ENCODE measurements at regions of chr21 and their contacts with region 1.

Region 1: DNA sequence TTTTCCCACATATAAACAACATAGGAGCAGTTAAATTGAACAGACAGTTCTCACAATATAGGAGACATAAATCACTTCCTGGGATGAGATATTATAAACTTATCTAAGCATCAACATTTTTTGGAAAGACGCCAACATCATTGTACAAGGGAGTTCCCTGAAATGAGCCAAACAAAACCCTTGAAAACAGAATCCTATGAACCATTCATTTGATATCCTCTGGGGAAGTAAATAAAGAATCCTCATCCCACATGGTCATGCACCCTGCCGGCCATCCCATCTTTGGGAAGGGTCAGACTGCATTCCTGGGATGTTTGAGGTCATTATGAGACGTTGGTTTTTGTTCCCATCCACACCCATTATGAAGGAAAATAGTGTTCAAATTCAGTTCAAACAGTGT is 111.8 kb upstream of the USP25 start:
- DNase-seq: no peak
- ATAC-seq: no peak
- H3K4me3 ChIP-seq: no peak overlapping the region
- H3K27ac ChIP-seq: no peak overlapping the region
- H3K4me1 ChIP-seq: no peaks in the 10 kb centered on the region
- H3K27me3 ChIP-seq: no peaks in the 10 kb centered on the region
- CTCF ChIP-seq: no peak
- POLR2A ChIP-seq: no peak

Region 2: GRCh38 chr21:15534450-15534886 is 83.5 kb before region 1 on chr21:
- intact Hi-C with region 1: no loop called
- DNase-seq: no peak
- ATAC-seq: no peak
- H3K4me3 ChIP-seq: no peak overlapping the region
- H3K27ac ChIP-seq: no peak overlapping the region
- H3K4me1 ChIP-seq: no peaks in the 10 kb centered on the region
- H3K27me3 ChIP-seq: peaks cover 0 to 19% (median 0%) of the 10 kb centered on the region in 9 donors
- CTCF ChIP-seq: no peak
- POLR2A ChIP-seq: no peak

Region 3: DNA sequence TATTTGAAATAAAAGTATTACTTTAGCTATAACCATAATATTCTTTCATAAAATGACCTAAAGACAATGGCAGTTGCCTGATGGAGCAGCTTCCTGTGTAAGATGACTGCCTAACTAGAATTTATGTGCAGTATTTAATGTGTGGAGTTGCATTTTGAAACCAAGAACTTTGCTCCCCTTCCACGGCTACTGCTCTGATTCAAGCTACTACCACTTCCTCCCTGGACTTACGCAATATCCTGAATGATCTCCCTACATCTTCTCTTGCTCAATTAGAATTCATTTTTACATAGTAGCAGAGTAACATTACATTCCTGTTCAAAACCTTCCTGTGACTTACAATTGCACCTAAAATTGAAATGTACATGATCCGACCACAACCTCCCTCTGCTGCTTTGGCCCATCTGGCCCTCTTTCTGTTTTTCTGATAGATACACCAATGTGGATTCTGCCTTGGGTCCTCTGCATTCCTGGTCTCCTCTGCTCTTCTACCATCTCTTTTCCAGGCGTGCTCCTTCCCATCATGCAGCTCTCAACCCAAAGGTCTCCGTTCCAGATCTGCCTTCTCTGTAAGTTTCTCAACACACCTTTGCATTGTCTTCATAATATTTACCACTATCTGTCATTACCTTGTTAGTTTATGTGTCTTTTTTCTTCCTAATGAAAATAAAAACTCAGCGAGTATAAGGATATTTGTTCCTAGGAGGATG is 64.4 kb after region 1 on chr21:
- intact Hi-C with region 1: no loop called
- DNase-seq: no peak
- ATAC-seq: peak in 3 of 4 donors; percentile 20 to 66 (median 50)
- H3K4me3 ChIP-seq: peak overlapping the region in 1 of 12 donors; percentile 28
- H3K27ac ChIP-seq: peak overlapping the region in 1 of 12 donors; percentile 86
- H3K4me1 ChIP-seq: peaks cover 0 to 42% (median 0%) of the 10 kb centered on the region in 12 donors
- H3K27me3 ChIP-seq: no peaks in the 10 kb centered on the region
- CTCF ChIP-seq: no peak
- POLR2A ChIP-seq: no peak

Region 4: GRCh38 chr21:15826147-15826780 is 208.3 kb after region 1 on chr21:
- intact Hi-C with region 1: loop called in 1 of 10 experiments (anchors 10 kb)
- DNase-seq: peak in 1 of 5 donors; percentile 11
- ATAC-seq: peak; percentile 46 to 76 (median 68)
- H3K4me3 ChIP-seq: peak overlapping the region in 1 of 12 donors; percentile 7
- H3K27ac ChIP-seq: peak overlapping the region; percentile 25 to 82 (median 63)
- H3K4me1 ChIP-seq: peaks cover 0 to 28% (median 8%) of the 10 kb centered on the region in 12 donors
- H3K27me3 ChIP-seq: no peaks in the 10 kb centered on the region
- CTCF ChIP-seq: peak; percentile 18 to 67 (median 53)
- POLR2A ChIP-seq: no peak